ENCODE measurements at regions of chr15 and their contacts with region 1.

Region 1: GRCh38 chr15:69729161-69729748 is 276.6 kb downstream of the RPLP1 start:
- DNase-seq: no peak

Region 2: GRCh38 chr15:70077188-70078147 is 348.2 kb after region 1 on chr15:
- intact Hi-C with region 1: loop called in 1 of 2 experiments (anchors 10 kb)
- DNase-seq: no peak